K562 (cell line): ENCODE measurements at regions of chr11 and their contacts with region 1.

Region 1: DNA sequence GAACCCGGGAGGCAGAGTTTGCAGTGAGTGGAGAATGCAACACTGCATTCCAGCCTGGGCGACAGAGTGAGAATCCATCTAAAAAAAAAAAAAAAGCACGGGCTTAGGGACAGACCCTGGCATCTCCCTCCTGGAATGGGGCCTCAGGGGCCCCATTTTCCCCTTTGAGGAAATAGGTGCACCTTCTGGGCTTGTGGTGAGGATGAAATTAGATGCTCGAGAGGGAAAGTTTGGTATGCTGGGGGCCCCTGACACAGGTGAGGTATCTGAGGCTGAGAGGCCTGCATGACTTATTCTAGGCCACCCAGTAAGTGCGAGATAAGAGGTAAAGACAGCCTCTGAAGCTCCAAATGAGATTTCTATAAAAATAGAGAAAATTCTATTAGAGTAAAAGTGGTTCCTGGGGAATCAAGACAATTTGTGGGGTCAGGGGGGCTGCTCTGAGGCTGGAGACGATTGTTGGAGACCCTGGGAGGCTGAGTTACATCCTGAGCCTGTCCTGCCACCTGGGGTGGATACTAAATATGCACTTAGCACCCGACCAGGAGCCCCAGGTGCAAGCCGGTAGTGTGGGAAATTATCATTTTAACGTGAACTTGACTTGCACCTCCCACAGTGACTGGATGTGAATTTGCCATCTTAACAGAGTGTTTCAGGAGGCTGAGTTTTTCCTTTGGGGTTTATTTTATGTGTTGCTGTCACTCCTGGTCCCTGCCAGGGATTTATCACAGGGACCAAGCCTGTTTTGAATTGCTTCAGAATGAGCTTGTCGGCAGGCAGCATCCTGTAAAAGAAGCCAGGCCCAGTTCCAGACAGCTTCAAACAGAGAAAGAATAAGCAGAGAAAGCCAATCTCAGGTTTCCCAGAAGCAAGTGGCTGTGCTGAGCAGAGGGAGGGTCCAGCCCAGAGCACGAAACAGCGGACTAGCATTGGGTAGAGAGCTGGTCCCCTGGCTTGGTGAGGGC is 48.4 kb upstream of the TSKU start:
- DNase-seq: peak in 1 of 4 experiments; percentile 18
- ATAC-seq: peak; percentile 6; the same call in 2 of the 3 replicates
- H3K4me3 ChIP-seq: no peak overlapping the region
- H3K27ac ChIP-seq: no peak overlapping the region
- H3K4me1 ChIP-seq: peaks cover 29 to 35% of the 10 kb centered on the region in 2 experiments
- H3K27me3 ChIP-seq: no peaks in the 10 kb centered on the region
- CTCF ChIP-seq: no peak
- EP300 ChIP-seq: no peak
- POLR2A ChIP-seq: no peak
- RAD21 ChIP-seq: no peak

Region 2: DNA sequence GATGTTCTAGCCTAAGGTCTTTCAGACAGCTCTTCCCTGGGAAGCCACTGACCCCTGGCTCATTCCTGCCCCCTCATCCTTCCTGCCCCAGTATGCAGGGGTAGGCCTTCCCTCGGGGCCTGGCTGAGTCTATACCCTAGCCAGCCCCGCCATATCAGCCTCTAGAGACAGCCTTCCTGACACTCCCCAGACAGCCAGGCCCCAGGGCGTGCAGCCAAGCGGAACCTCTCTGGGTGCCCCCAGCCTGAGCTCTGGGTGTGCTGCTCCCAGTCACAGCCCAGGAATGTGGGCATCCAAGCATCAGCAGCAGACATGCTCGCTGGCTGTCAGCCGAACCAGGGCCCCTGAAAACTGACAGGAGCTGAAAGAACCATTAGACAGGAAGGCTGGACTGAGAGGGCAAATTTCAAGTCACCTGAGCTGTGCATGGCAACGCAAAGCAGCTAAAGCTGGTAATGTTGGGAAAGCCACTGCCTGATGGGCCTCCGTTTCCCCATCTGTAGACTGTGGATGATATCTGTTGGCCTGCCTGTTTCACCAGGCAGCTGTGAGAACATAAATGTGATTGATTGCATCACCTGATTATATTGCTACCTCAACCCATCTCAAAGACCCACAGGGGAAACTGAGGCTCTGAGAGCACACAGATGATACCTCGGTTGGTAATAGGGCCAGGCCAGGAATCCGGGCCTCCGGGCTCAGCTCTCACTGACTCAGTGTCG is 157.4 kb before region 1 on chr11:
- CTCF ChIA-PET with region 1: no interaction called
- POLR2A ChIA-PET with region 1: no interaction called
- in situ Hi-C with region 1: no loop called
- intact Hi-C with region 1: no loop called
- DNase-seq: no peak
- ATAC-seq: no peak; the same call in 1 of the 3 replicates
- H3K4me3 ChIP-seq: no peak overlapping the region
- H3K27ac ChIP-seq: no peak overlapping the region
- H3K4me1 ChIP-seq: peaks cover 0 to 12% of the 10 kb centered on the region in 2 experiments; a peak in 2 of 5 replicates
- H3K27me3 ChIP-seq: no peaks in the 10 kb centered on the region
- CTCF ChIP-seq: no peak
- EP300 ChIP-seq: no peak
- POLR2A ChIP-seq: no peak
- RAD21 ChIP-seq: no peak

Region 3: GRCh38 chr11:76721755-76722677 is 12.7 kb before region 1 on chr11:
- CTCF ChIA-PET with region 1: no interaction called
- POLR2A ChIA-PET with region 1: interaction called, 10 read pairs
- in situ Hi-C with region 1: no loop called
- intact Hi-C with region 1: no loop called
- DNase-seq: peak; percentile 62 to 91 (median 78)
- ATAC-seq: peak; percentile 98
- H3K4me3 ChIP-seq: no peak overlapping the region
- H3K27ac ChIP-seq: no peak overlapping the region
- H3K4me1 ChIP-seq: peaks cover 4 to 18% of the 10 kb centered on the region in 2 experiments; a peak in 4 of 5 replicates
- H3K27me3 ChIP-seq: 0 out of 5 replicates have a peak, but pooled peaks cover 2 to 5% of the 10 kb centered on the region in 2 experiments
- CTCF ChIP-seq: peak; percentile 92
- EP300 ChIP-seq: no peak
- POLR2A ChIP-seq: no peak
- RAD21 ChIP-seq: peak; percentile 54 to 78

Region 4: DNA sequence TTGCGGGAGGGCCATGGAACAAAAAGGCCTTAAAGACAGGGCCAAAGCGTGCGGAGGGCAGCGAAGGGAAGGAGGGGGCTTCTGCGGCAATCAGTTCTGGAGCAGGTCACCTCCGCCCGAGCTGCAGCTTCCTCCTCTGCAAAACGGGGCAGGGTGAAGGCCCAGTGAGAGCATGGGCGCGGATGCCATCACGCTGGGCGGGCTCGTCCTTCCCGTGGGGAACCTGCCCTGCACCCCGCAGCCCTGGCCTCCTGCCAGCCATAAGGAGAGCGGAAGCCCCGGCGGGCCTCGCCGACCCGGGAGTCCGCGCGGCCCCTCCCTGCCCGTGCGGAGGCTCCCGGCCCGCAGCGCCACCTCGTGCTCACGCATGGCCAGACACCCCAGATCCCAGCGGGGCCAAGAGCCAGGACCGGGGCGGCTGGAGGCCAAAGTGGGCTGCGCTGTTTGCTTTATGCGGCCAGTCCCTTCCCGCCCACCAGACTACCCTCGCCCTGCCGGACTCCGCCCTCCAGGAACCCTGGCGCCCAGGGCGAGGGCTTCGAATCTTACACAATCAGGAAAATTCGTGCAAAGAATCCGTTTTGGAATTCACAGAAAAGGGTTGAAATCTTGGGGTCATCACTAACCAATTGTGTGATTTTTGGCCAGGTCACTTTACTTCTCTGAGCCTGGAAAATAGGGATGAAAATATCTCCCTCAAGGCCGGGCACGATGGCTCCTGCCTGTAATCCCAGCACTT is 64.5 kb after region 1 on chr11:
- CTCF ChIA-PET with region 1: interaction called, 39 read pairs
- POLR2A ChIA-PET with region 1: interaction called, 4 read pairs
- in situ Hi-C with region 1: no loop called
- intact Hi-C with region 1: loop called (anchors 1 kb)
- DNase-seq: peak; percentile 88 to 96 (median 93)
- ATAC-seq: peak; percentile 98
- H3K4me3 ChIP-seq: no peak overlapping the region
- H3K27ac ChIP-seq: no peak overlapping the region
- H3K4me1 ChIP-seq: peaks cover 2 to 21% of the 10 kb centered on the region in 2 experiments; a peak in 3 of 5 replicates
- H3K27me3 ChIP-seq: no peaks in the 10 kb centered on the region
- CTCF ChIP-seq: peak; percentile 88 to 96 (median 90)
- EP300 ChIP-seq: no peak
- POLR2A ChIP-seq: 0 out of 2 replicates have a peak, but pooled peaks have one; percentile 40
- RAD21 ChIP-seq: peak; percentile 97 to 98

Region 5: DNA sequence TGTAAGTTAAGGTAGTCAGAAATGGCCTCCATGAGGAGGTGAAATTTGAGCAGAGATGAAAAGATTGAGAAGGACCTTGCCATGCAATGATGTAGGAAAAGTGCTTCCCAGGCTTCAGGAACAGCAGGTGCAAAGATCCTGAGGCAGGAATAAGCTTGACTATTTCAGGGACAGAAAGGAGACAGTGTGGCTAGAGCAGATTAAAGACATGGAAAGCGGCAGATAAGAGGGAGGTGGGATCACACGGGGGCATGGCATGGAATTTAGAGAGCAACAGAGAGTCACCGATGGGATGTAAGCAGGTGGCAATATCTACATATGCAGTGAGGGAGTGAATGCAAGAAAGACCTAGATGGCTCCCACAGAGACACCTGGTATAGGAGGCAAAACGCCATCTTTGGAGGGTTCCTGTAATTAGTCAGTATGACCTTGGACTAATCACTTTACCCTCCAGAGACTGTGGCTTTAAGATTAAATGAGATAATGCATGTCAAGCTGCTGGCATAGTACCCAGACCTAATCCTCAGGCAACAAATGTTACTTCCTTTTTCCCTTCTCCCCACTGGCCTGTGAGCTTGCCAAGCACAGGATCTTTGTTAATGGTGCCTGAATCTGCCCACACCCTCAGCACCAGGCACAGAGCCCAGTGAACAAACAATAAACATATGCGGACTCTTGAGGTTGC is 101.3 kb after region 1 on chr11:
- CTCF ChIA-PET with region 1: interaction called, 17 read pairs
- POLR2A ChIA-PET with region 1: no interaction called
- in situ Hi-C with region 1: no loop called
- intact Hi-C with region 1: loop called (anchors 1 kb)
- DNase-seq: no peak
- ATAC-seq: no peak
- H3K4me3 ChIP-seq: no peak overlapping the region
- H3K27ac ChIP-seq: no peak overlapping the region
- H3K4me1 ChIP-seq: peaks cover 24 to 28% of the 10 kb centered on the region in 2 experiments; a peak in 3 of 5 replicates
- H3K27me3 ChIP-seq: no peaks in the 10 kb centered on the region
- CTCF ChIP-seq: no peak
- EP300 ChIP-seq: no peak
- POLR2A ChIP-seq: no peak
- RAD21 ChIP-seq: no peak

Region 6: DNA sequence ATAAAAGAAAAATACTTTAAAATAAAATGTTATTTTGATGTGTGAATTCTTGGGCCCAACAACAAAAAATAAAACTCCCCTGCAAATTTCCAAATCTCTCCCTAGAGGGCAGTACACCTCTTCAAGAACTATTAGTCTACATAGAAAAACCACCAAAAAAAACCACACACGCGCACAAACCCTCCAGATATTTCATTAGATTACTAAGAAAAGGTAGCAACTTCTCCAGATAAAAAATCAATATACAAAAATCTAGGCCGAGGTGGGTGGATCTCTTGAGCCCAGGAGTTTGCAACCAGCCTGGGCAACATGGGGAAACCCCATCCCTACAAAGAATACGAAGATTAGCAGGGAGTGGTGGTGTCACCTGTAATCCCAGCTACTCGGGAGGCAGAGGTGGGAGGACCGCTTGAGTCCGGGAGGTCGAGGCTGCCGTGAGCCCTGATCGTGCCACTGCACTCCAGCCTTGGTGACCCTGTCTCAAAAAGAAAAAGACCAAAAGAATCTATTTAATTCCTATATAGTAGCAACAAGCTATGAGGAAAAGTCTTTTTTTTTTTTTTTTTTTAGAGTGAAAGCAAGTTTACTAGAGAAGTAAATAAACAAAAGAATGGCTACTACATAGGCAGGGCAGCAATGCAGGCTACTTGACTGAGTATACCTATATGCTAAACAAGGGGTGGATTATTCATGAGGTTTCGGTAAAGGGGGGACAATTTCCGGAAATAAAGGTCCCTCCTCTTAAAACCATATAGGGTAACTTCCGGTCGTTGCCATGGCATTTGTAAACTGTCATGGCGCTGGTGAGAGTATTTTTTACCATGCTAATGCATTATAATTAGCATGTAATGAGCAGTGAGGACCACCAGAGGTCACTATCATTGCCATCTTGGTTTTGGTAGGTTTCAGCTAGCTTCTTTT is 312.5 kb after region 1 on chr11:
- CTCF ChIA-PET with region 1: interaction called, 25 read pairs
- POLR2A ChIA-PET with region 1: no interaction called
- in situ Hi-C with region 1: loop called (anchors 10 kb)
- intact Hi-C with region 1: loop called (anchors 2 kb)
- DNase-seq: peak; percentile 54 to 93 (median 73)
- ATAC-seq: peak; percentile 91
- H3K4me3 ChIP-seq: peak overlapping the region; percentile 37
- H3K27ac ChIP-seq: no peak overlapping the region
- H3K4me1 ChIP-seq: peaks cover 3 to 6% of the 10 kb centered on the region in 2 experiments; a peak in 4 of 5 replicates
- H3K27me3 ChIP-seq: no peaks in the 10 kb centered on the region
- CTCF ChIP-seq: peak; percentile 65 to 90 (median 69)
- EP300 ChIP-seq: no peak
- POLR2A ChIP-seq: no peak
- RAD21 ChIP-seq: peak; percentile 60 to 71